IMR-90 (cell line): ENCODE measurements at regions of chr22 and their contacts with region 1.

Region 1: DNA sequence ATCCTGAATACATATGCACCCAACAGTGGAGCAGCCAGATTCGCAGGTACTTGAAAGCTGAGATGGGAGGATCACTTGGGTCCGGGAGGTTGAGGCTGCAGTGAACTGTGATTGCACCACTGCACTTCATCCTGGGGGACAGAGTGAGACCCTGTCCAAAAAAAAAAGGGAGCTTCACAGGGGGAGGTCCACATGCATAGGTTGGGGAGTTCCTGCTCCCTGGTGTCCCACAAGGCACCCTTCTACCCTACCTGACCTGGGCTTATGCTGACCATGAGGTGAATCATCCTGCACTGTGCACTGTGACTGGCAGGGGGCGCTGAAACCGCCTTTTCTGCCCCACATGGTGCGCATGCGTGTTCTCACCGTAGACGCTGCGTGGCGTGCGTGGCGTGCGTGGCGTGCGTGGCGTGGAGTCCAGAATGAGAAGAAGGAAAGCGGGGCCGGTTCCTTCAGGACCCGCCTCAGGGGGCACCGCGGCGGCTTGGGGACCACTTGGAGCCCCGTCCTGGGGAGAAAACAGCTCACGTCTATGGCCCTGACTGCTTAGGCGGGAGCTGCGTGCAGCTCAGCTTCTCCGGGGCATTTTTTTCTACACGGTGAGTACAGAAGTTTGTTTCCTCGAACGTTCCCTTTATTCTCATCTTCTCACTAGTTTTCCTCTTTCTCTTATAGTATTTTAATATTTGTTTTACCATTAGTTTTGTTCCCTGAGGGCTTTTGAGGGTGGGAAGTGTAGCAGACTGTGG is 116.6 kb upstream of the GRK3 start:
- DNase-seq: peak; percentile 78
- ATAC-seq: peak; percentile 93
- H3K4me3 ChIP-seq: peak overlapping the region; percentile 69
- H3K27ac ChIP-seq: peak overlapping the region; percentile 84
- H3K4me1 ChIP-seq: peaks cover 15% of the 10 kb centered on the region
- H3K27me3 ChIP-seq: no peaks in the 10 kb centered on the region
- CTCF ChIP-seq: peak; percentile 99
- POLR2A ChIP-seq: peak; percentile 70; the same call in 1 of the 2 replicates
- RAD21 ChIP-seq: peak; percentile 58

Region 2: DNA sequence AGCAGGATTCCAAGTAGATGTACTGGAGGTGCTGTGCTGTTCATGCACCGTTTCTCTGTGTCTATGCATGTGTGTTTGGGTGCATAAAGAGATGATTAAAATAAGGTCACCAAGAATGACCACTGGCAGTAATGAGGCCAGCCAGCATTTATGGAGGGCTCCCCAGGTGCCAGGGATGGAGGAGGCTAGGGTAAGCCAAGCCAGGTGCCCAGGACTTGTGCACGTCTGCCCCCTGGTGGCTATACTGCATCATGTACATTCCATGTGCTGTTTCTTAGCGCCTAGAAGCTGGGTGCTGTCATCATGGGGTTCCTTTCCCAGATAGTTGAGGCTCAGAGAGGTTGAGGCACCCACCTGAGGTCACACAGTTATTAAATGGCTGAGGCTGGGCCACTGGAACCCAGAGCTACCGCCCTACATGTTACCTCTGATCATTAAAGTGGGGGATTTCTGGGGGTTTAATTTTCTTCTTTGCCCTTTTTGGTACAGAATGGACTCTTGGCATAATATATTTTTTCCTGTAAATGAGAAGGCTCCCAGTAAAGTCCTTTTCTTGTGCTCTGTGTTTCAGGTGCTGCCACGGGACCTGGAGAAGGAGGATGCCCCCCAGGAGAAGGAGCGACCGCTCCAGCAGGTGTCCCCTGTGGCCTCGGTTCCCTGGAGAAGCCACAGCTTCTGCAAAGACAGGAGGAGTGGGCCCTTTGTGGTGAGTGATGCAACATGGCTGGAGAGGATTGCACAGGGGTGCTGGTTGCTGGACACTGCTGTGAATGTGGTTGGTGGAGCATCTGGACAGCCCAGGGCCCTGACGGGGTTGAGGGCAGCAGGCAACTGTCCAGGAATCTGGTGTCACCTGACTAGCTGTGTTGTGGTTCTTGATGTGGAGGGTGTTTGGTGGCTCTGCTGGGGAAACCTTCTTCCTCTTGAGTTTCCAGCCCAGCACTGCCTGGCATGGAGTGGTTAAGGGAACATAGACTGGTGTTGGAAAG is 398.9 kb before region 1 on chr22:
- CTCF ChIA-PET with region 1: no interaction called
- POLR2A ChIA-PET with region 1: no interaction called
- dilution Hi-C with region 1: no loop called
- in situ Hi-C with region 1: no loop called
- intact Hi-C with region 1: no loop called
- DNase-seq: peak; percentile 23
- ATAC-seq: peak; percentile 91
- H3K4me3 ChIP-seq: no peak overlapping the region
- H3K27ac ChIP-seq: no peak overlapping the region
- H3K4me1 ChIP-seq: no peaks in the 10 kb centered on the region
- H3K27me3 ChIP-seq: no peaks in the 10 kb centered on the region
- CTCF ChIP-seq: peak; percentile 68
- POLR2A ChIP-seq: no peak
- RAD21 ChIP-seq: peak; percentile 74

Region 3: GRCh38 chr22:25202290-25202921 is 245.5 kb before region 1 on chr22:
- CTCF ChIA-PET with region 1: interaction called, 4 read pairs
- POLR2A ChIA-PET with region 1: no interaction called
- dilution Hi-C with region 1: no loop called
- in situ Hi-C with region 1: no loop called
- intact Hi-C with region 1: loop called (anchors 5 kb)
- DNase-seq: peak; percentile 43
- ATAC-seq: peak; percentile 97
- H3K4me3 ChIP-seq: no peak overlapping the region
- H3K27ac ChIP-seq: no peak overlapping the region
- H3K4me1 ChIP-seq: no peaks in the 10 kb centered on the region
- H3K27me3 ChIP-seq: no peaks in the 10 kb centered on the region
- CTCF ChIP-seq: peak; percentile 83
- POLR2A ChIP-seq: no peak
- RAD21 ChIP-seq: peak; percentile 72

Region 4: GRCh38 chr22:25375683-25376082 is 72.2 kb before region 1 on chr22:
- CTCF ChIA-PET with region 1: no interaction called
- POLR2A ChIA-PET with region 1: no interaction called
- dilution Hi-C with region 1: no loop called
- in situ Hi-C with region 1: no loop called
- intact Hi-C with region 1: no loop called
- DNase-seq: no peak
- ATAC-seq: no peak
- H3K4me3 ChIP-seq: no peak overlapping the region
- H3K27ac ChIP-seq: no peak overlapping the region
- H3K4me1 ChIP-seq: no peaks in the 10 kb centered on the region
- H3K27me3 ChIP-seq: no peaks in the 10 kb centered on the region
- CTCF ChIP-seq: no peak
- POLR2A ChIP-seq: no peak
- RAD21 ChIP-seq: no peak

Region 5: GRCh38 chr22:25403811-25404471 is 43.9 kb before region 1 on chr22:
- CTCF ChIA-PET with region 1: interaction called, 3 read pairs
- POLR2A ChIA-PET with region 1: no interaction called
- dilution Hi-C with region 1: no loop called
- in situ Hi-C with region 1: no loop called
- intact Hi-C with region 1: loop called (anchors 2 kb)
- DNase-seq: peak; percentile 41
- ATAC-seq: peak; percentile 4
- H3K4me3 ChIP-seq: peak overlapping the region; percentile 93
- H3K27ac ChIP-seq: peak overlapping the region; percentile 61
- H3K4me1 ChIP-seq: peaks cover 30% of the 10 kb centered on the region
- H3K27me3 ChIP-seq: no peaks in the 10 kb centered on the region
- CTCF ChIP-seq: no peak
- POLR2A ChIP-seq: no peak
- RAD21 ChIP-seq: no peak

Region 6: DNA sequence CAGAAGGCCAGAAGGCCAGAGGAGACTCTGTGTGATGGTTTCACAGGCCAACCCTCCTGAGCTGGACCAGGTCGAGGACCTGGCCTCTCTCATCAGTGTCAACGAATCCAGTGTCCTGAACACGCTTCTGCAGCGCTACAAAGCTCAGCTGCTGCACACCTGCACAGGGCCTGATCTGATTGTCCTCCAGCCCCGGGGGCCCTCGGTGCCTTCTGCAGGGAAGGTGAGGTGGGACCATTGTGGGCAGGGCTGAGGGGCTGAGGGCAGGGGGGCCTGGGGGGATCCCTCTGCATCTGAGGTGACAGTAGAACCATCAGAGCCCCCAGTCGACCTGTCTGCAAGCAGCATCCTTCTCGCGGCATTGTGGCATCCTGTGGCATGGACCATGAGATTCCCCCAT is 324.4 kb after region 1 on chr22:
- CTCF ChIA-PET with region 1: interaction called, 5 read pairs
- POLR2A ChIA-PET with region 1: no interaction called
- dilution Hi-C with region 1: no loop called
- in situ Hi-C with region 1: loop called (anchors 5 kb)
- intact Hi-C with region 1: loop called (anchors 2 kb)
- DNase-seq: no peak
- ATAC-seq: no peak
- H3K4me3 ChIP-seq: no peak overlapping the region
- H3K27ac ChIP-seq: no peak overlapping the region
- H3K4me1 ChIP-seq: no peaks in the 10 kb centered on the region
- H3K27me3 ChIP-seq: peaks cover 5% of the 10 kb centered on the region; the same call in 1 of the 2 replicates
- CTCF ChIP-seq: no peak
- POLR2A ChIP-seq: no peak
- RAD21 ChIP-seq: no peak

Region 7: GRCh38 chr22:26330966-26331625 is 883.2 kb after region 1 on chr22:
- CTCF ChIA-PET with region 1: no interaction called
- POLR2A ChIA-PET with region 1: no interaction called
- dilution Hi-C with region 1: no loop called
- in situ Hi-C with region 1: loop called (anchors 25 kb)
- intact Hi-C with region 1: no loop called
- DNase-seq: peak; percentile 23
- ATAC-seq: peak; percentile 86
- H3K4me3 ChIP-seq: no peak overlapping the region
- H3K27ac ChIP-seq: no peak overlapping the region
- H3K4me1 ChIP-seq: no peaks in the 10 kb centered on the region
- H3K27me3 ChIP-seq: peaks cover 5% of the 10 kb centered on the region; the same call in 1 of the 2 replicates
- CTCF ChIP-seq: peak; percentile 81
- POLR2A ChIP-seq: no peak
- RAD21 ChIP-seq: peak; percentile 88